Motor neuron (in vitro differentiated cells): ENCODE measurements at regions of chr6 and their contacts with region 1.

Region 1: GRCh38 chr6:5398530-5398929 is 137.2 kb downstream of the FARS2 start:
- ATAC-seq: peak in 1 of 8 experiments; percentile 34
- H3K4me3 ChIP-seq: no peak overlapping the region
- H3K27ac ChIP-seq: no peak overlapping the region
- H3K4me1 ChIP-seq: no peaks in the 10 kb centered on the region

Region 2: GRCh38 chr6:5053038-5053437 is 345.5 kb before region 1 on chr6:
- in situ Hi-C with region 1: loop called in 1 of 9 experiments (anchors 25 kb)
- ATAC-seq: no peak
- H3K4me3 ChIP-seq: no peak overlapping the region
- H3K27ac ChIP-seq: no peak overlapping the region
- H3K4me1 ChIP-seq: no peaks in the 10 kb centered on the region

Region 3: DNA sequence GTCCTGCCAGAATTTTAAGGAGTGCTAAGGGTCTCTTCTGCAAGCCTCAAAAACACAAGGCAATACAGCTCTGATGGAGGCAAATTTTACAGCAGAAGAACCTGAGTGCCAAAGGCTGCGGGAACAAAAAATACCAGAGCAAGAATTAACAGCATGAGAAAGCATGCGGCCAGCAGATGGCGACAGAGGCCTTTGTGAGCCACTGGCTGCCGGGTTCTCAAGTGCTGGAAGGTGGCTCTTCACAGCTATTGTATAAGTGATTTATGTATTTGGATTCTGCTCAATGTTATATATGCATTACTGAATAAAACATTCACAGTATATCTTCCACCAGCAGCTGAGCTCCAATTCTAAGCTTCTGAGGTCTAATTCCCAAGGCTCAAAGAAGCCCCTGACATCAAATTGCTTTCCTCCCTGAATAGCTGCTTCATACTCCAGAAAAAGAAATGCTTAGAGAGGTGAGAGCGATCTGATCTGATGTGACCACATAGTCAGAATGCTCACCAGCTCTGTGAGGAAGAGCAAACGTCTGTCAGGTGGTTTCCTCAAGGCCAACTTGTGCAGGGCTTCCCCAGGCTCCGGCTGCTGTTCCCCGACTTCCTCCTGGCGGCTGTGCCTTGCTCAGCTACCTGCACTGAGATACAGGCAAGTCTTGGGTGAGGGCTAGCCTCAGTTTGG is 254.8 kb before region 1 on chr6:
- in situ Hi-C with region 1: loop called in 1 of 9 experiments (anchors 25 kb)
- ATAC-seq: peak; percentile 86 to 97 (median 90)
- H3K4me3 ChIP-seq: no peak overlapping the region
- H3K27ac ChIP-seq: peak overlapping the region; percentile 6 to 15
- H3K4me1 ChIP-seq: peaks cover 20 to 24% of the 10 kb centered on the region in 2 donors